GM12878 (cell line): ENCODE measurements at regions of chr16 and their contacts with region 1.

Region 1: DNA sequence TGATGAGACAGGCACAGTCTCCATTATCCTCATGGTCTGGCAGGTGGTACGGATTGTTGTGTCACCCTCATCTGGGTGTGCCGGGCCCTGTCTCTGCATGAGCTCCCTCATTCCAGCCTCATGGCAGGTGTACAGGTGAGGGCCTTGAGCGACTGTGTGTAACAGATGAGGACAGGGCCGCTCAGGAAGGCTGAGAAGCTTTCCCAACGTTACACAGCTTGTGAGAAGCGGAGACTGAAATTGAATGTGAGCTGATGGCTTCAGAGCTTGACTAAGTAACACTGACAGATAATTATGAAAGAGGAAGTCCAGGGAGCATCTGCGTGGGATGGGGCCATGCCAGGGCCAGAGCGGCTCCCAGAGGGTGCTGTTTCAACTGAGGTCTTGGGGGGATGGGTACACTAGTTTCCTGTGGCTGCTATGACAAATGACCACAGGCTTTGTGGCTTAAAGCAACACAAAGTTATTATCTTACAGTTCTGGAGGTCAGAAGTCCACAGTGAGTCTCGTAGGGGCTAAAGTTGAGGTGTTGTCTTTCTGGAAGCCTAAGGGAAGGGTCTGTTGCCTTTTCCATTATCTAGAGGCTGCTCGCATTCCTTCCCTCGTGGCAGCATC is 36.7 kb downstream of the CMIP start:
- DNase-seq: peak; percentile 97
- ATAC-seq: peak; percentile 87
- H3K4me3 ChIP-seq: peak overlapping the region; percentile 39; the same call in 1 of the 2 replicates
- H3K27ac ChIP-seq: peak overlapping the region; percentile 92
- H3K4me1 ChIP-seq: peaks cover 60% of the 10 kb centered on the region
- H3K27me3 ChIP-seq: no peaks in the 10 kb centered on the region
- CTCF ChIP-seq: peak; percentile 14 to 27 (median 26); a peak in 3 of 6 replicates
- EP300 ChIP-seq: peak; percentile 96 to 98
- POLR2A ChIP-seq: peak; percentile 84
- RAD21 ChIP-seq: peak; percentile 52

Region 2: DNA sequence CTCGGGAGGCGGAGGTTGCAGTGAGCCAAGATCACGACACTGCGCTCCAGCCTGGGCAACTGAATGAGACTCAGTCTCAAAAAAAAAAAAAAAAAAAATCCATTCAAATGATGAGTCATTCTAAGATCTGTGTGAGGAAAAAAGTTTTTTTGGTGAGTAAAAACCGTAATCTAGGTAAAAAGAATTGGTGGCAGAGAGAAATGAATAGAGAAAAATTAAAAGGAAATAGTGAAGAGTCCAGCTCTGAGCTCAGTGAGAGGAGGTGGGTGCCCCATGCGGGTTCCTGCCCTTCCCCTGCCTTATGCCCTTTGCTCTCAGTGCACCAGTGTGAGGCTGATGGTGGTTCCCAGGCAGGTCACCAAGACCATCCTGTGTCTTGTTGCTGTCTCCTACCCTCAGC is 145.6 kb before region 1 on chr16:
- CTCF ChIA-PET with region 1: no interaction called
- POLR2A ChIA-PET with region 1: no interaction called
- RAD21 ChIA-PET with region 1: no interaction called
- SMC1A ChIA-PET with region 1: no interaction called
- in situ Hi-C with region 1: no loop called
- intact Hi-C with region 1: no loop called
- DNase-seq: no peak
- ATAC-seq: peak; percentile 74
- H3K4me3 ChIP-seq: no peak overlapping the region
- H3K27ac ChIP-seq: no peak overlapping the region
- H3K4me1 ChIP-seq: peaks cover 4% of the 10 kb centered on the region
- H3K27me3 ChIP-seq: no peaks in the 10 kb centered on the region
- CTCF ChIP-seq: no peak
- EP300 ChIP-seq: no peak
- POLR2A ChIP-seq: no peak
- RAD21 ChIP-seq: no peak

Region 3: DNA sequence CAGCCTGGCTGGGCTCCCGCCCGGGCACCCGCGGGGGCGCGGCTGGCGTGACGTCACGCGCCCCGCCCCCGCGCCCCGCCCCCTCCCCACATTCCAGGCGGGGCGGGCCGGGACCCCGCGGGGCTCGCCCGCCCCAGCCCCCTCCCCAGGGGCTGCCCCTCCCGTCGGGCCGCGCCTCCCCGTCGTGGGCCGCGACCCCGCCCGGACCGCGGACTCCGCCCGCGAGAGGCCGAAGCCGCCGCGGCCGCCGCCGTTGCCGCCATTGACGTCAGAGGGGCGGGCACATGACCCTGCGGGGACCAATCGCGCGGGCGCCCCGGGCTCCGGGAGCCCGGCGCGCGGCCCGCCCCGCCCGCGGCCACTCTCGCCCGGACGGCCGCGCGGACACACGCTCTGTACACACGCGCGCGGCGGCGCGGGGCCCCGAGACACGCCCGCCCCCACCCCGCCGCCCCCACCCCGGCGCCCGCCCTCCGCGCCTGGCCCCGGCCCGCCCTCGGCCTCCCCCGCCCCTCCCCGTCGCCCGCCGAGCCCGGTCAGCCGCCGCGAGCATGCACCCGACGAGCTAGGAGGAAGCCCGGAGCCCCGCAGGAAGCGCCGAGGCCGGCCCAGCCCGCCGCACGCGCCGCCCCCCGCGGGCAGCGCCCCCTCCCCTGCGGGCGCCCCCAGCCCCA is 36.7 kb before region 1 on chr16 and contains the start of gene CMIP:
- CTCF ChIA-PET with region 1: interaction called, 17 read pairs
- POLR2A ChIA-PET with region 1: interaction called, 16 read pairs
- RAD21 ChIA-PET with region 1: interaction called, 17 read pairs
- SMC1A ChIA-PET with region 1: interaction called, 38 read pairs
- in situ Hi-C with region 1: no loop called
- intact Hi-C with region 1: loop called (anchors 1 kb)
- DNase-seq: no peak
- ATAC-seq: peak; percentile 59
- H3K4me3 ChIP-seq: peak within 1 kb of the TSS; percentile 100
- H3K27ac ChIP-seq: peak within 1 kb of the TSS; percentile 87
- H3K4me1 ChIP-seq: peaks cover 13% of the 10 kb centered on the region
- H3K27me3 ChIP-seq: peaks cover 0 to 2% of the 10 kb centered on the region in 2 experiments; a peak in 1 of 4 replicates
- CTCF ChIP-seq: no peak
- EP300 ChIP-seq: no peak
- POLR2A ChIP-seq: no peak
- RAD21 ChIP-seq: no peak
- polyA plus RNA-seq, gene CMIP: 1.4 to 1.7 TPM

Region 4: GRCh38 chr16:81469710-81470535 is 11.4 kb before region 1 on chr16:
- CTCF ChIA-PET with region 1: interaction called, 9 read pairs
- POLR2A ChIA-PET with region 1: interaction called, 10 read pairs
- RAD21 ChIA-PET with region 1: interaction called, 19 read pairs
- SMC1A ChIA-PET with region 1: interaction called, 39 read pairs
- in situ Hi-C with region 1: no loop called
- intact Hi-C with region 1: loop called (anchors 1 kb)
- DNase-seq: peak; percentile 65
- ATAC-seq: peak; percentile 90
- H3K4me3 ChIP-seq: peak overlapping the region; percentile 33; the same call in 1 of the 2 replicates
- H3K27ac ChIP-seq: peak overlapping the region; percentile 74
- H3K4me1 ChIP-seq: peaks cover 29% of the 10 kb centered on the region
- H3K27me3 ChIP-seq: no peaks in the 10 kb centered on the region
- CTCF ChIP-seq: no peak
- EP300 ChIP-seq: no peak
- POLR2A ChIP-seq: no peak
- RAD21 ChIP-seq: 0 out of 2 replicates have a peak, but pooled peaks have one; percentile 9

Region 5: DNA sequence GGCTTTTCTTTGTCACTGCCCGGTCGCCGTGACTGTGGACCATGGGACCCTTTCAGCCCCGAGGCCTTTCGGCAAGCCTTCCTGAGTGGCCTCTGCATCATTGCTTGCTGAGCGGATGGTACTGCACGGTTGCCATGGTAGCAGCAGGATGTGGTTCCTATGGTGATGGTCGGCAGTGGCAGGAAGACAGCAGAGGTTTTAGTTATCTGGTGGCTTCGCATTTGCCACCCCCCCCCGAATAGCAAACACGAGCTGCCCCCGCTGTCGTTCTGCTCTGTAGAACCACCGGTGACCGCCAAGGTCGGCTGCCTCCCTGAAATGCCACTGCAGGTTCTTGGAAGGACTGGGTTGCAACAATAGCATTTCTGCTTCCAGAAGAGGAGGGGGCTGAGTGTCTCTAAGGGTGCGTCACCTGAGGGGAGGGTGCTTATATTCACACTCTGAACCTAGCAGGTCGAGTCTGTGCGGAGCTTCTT is 39.9 kb after region 1 on chr16:
- CTCF ChIA-PET with region 1: interaction called, 3 read pairs
- POLR2A ChIA-PET with region 1: interaction called, 4 read pairs
- RAD21 ChIA-PET with region 1: interaction called, 17 read pairs
- SMC1A ChIA-PET with region 1: interaction called, 5 read pairs
- in situ Hi-C with region 1: no loop called
- intact Hi-C with region 1: loop called (anchors 1 kb)
- DNase-seq: no peak
- ATAC-seq: peak; percentile 49
- H3K4me3 ChIP-seq: no peak overlapping the region
- H3K27ac ChIP-seq: no peak overlapping the region
- H3K4me1 ChIP-seq: peaks cover 28% of the 10 kb centered on the region
- H3K27me3 ChIP-seq: no peaks in the 10 kb centered on the region
- CTCF ChIP-seq: no peak
- EP300 ChIP-seq: no peak
- POLR2A ChIP-seq: no peak
- RAD21 ChIP-seq: no peak

Region 6: GRCh38 chr16:81715358-81716196 is 234.3 kb after region 1 on chr16:
- CTCF ChIA-PET with region 1: interaction called, 3 read pairs
- POLR2A ChIA-PET with region 1: interaction called, 8 read pairs
- RAD21 ChIA-PET with region 1: interaction called, 8 read pairs
- SMC1A ChIA-PET with region 1: interaction called, 4 read pairs
- in situ Hi-C with region 1: no loop called
- intact Hi-C with region 1: loop called (anchors 1 kb)
- DNase-seq: peak; percentile 77
- ATAC-seq: peak; percentile 72
- H3K4me3 ChIP-seq: peak overlapping the region; percentile 64
- H3K27ac ChIP-seq: peak overlapping the region; percentile 75
- H3K4me1 ChIP-seq: peaks cover 34% of the 10 kb centered on the region
- H3K27me3 ChIP-seq: no peaks in the 10 kb centered on the region
- CTCF ChIP-seq: no peak
- EP300 ChIP-seq: peak; percentile 69 to 86
- POLR2A ChIP-seq: no peak
- RAD21 ChIP-seq: no peak